ENCODE measurements at regions of chr21 and their contacts with region 1.

Region 1: GRCh38 chr21:32569261-32570230 is 15.8 kb downstream of the TCP10L start:
- DNase-seq: peak; percentile 80
- ATAC-seq: peak; percentile 92 to 96

Region 2: DNA sequence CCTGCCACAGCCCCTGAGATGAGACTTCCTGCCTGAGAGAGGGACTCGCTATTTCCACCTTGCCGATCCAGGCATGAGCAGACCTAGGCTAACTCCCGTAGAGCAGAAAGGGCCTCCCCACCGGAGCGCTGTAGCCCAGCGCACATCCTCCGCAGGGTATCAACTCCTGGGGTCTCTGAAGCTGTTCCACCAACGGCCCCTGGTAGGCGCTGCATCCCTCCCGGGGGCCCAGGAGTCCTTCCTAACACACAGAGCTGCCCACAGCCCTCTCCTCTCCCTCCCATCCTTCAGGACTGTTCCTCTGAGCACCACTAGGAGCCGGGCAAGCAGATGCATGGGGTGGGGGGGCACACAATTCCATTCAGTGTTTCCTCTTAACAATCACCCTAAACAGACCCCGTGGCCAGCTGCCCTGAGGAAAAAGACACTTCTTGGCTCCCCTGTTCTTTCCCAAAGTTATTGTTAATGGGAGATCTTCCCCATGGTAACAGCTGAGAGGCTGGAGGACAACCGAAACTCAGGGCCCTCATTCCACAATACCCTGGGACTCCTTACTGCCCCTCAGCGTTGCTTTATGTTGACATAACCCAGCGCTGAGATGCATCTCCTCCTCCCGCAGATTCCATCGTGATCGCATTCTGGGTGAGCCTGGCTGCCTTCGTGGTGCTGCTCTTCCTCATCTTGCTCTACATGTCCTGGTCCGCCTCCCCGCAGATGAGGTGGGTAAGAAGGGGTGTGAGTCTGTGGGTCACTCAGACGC is 263.3 kb before region 1 on chr21:
- intact Hi-C with region 1: no loop called
- DNase-seq: no peak
- ATAC-seq: peak; percentile 35 to 47

Region 3: DNA sequence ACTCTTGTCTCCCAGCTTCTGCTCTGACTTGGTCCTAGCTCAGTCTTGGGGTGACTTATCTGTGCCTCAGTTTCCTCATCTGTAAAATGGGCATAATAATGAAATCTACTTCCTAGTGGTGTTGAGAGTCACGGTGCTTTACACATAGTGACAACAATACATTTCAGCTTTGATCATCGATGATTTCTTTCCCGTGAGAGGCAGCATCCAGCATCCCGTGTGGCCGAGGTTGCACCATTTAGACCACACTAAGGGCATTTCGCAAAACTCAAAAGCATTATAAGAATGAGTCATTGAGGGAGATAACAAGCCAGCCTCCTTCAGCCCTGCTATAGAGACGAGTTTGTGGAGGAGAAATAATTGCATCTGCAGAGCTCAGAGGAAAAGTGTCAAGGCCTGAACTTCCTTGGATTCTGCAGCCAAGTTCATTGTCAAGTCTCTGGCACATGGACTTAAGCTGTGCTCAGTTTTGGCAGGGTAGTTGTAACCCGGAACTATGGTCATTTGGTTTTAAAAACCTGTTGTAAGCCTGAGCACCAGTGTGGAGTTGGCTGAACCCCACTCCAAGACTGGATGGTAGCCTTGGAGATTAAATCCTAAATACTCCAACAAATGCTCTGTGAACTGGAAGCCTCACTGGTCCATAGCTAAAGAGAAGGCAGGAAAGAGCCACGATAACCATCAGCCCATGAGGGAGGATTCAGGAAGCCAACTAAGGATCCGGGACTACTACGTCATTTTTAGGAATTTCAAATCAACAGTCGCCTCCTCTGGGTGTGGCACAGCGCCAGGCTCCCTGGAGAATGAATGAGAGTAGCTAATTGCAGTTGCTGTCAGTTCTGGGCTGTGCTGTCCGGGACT is 48.4 kb before region 1 on chr21:
- intact Hi-C with region 1: loop called in 1 of 2 experiments (anchors 5 kb)
- DNase-seq: peak; percentile 95
- ATAC-seq: peak; percentile 64 to 81